ENCODE measurements at regions of chr10 and their contacts with region 1.

Region 1: GRCh38 chr10:11881477-11882417 is 58.6 kb downstream of the PROSER2 start:
- DNase-seq: peak; percentile 65
- ATAC-seq: peak; percentile 74
- H3K4me3 Mint-ChIP-seq: no peak overlapping the region
- H3K27ac Mint-ChIP-seq: peak overlapping the region; percentile 78; the same call in 1 of the 2 replicates
- H3K4me1 Mint-ChIP-seq: peaks cover 7% of the 10 kb centered on the region
- H3K27me3 Mint-ChIP-seq: no peaks in the 10 kb centered on the region; the same call in 1 of the 2 replicates
- CTCF ChIP-seq: peak; percentile 21; the same call in 1 of the 2 replicates

Region 2: DNA sequence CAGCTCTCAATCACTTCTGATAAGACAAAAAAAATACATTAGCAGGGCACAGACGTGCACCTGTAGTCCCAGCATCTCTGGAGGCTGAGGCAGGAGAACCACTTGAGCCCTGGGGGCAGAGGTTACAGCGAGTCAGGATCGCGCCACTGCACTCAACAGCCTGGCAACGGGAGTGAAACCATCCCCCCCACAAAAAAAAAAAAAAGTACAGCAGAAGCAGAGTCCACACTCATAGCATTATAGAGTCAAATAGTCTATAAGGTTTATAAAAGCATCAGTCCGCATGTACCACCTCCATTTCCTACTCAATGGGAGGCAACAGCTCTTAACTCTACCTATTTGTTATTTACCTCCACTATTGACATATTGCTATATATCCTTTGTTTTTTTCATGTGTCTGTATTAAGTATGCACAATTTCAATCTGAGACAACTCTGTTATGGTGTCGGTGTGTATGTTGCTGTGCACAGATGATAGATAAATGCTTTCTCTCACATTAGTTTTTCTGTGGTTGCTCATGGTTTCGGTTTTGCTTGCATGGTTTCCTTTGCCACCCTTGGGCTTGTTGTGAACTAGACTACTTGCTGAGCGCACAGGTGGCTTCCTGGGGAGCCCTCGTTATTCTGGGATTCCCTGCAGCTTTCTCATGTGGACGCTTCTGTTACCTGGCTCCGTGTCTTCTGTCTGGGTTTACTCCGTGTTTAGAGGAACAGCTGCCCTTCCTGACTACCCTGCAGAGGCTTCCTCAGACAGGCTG is 18.2 kb before region 1 on chr10:
- CTCF ChIA-PET with region 1: interaction called, 10 read pairs
- POLR2A ChIA-PET with region 1: no interaction called
- DNase-seq: no peak
- ATAC-seq: no peak
- H3K4me3 Mint-ChIP-seq: no peak overlapping the region
- H3K27ac Mint-ChIP-seq: no peak overlapping the region
- H3K4me1 Mint-ChIP-seq: peaks cover 13% of the 10 kb centered on the region
- H3K27me3 Mint-ChIP-seq: no peaks in the 10 kb centered on the region
- CTCF ChIP-seq: no peak

Region 3: DNA sequence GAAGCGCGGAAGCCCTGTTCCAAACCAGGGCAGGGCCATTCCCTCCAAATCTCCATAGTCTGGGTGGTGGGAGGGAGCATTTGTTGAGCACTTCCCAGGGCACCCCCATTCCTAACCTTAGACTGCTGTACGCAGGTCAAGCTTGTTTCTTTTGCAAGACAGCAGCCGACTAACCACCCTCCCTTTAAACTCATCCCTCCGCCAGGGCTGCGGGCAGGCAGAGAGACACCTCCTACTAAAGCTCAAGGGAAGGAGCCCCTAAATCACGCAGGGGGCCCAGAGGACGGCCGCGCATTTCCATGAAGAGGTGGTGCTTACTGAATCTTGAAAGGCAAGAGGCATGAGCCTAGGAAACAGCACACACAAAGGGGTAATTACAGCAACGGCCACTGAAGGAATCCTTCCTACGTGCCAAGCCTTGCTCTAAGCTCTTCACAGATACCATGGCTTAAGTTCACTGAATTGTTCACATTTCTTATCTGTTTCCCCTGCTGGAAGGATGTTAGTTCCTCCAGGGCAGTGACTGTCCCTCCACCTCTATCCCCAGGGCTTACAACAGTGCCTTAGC is 31.4 kb after region 1 on chr10:
- CTCF ChIA-PET with region 1: interaction called, 12 read pairs
- POLR2A ChIA-PET with region 1: no interaction called
- DNase-seq: no peak
- ATAC-seq: peak; percentile 25
- H3K4me3 Mint-ChIP-seq: no peak overlapping the region
- H3K27ac Mint-ChIP-seq: no peak overlapping the region; the same call in 1 of the 2 replicates
- H3K4me1 Mint-ChIP-seq: peaks cover 13% of the 10 kb centered on the region
- H3K27me3 Mint-ChIP-seq: no peaks in the 10 kb centered on the region
- CTCF ChIP-seq: no peak

Region 4: DNA sequence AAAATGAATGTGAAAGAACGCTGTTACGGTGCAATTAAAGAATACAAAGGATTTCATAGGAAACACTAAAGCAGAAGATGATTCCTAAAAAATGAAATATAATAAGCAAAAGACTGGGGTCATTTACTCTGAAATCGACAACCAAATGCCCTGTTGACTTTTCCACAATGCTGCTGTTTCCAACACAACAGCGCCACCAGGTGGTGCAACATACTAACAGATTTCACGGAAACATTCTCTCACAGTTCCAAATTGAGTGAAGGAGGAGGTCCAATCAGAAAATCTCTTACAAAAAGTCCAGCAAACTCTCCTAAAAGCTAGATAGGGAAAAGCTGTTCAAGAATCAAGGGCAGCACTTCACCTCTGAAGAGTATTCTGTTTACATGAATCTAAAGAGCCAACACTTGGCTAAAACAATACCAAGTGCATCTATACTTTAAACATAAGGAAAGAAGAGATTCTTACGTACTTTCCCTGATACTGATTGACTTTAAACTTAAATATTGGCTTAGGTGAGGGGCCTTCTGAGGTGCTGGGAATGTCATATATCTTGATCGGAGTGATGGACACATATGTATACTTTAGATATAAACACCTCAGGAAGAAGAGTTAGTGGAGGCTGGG is 105.0 kb after region 1 on chr10:
- CTCF ChIA-PET with region 1: interaction called, 53 read pairs
- POLR2A ChIA-PET with region 1: no interaction called
- DNase-seq: peak; percentile 82
- ATAC-seq: peak; percentile 67
- H3K4me3 Mint-ChIP-seq: no peak overlapping the region
- H3K27ac Mint-ChIP-seq: peak overlapping the region; percentile 82
- H3K4me1 Mint-ChIP-seq: no peaks in the 10 kb centered on the region
- H3K27me3 Mint-ChIP-seq: no peaks in the 10 kb centered on the region
- CTCF ChIP-seq: peak; percentile 89

Region 5: GRCh38 chr10:12241810-12242529 is 360.2 kb after region 1 on chr10:
- CTCF ChIA-PET with region 1: no interaction called
- POLR2A ChIA-PET with region 1: no interaction called
- DNase-seq: no peak
- ATAC-seq: no peak
- H3K4me3 Mint-ChIP-seq: no peak overlapping the region
- H3K27ac Mint-ChIP-seq: peak overlapping the region; percentile 13; the same call in 1 of the 2 replicates
- H3K4me1 Mint-ChIP-seq: no peaks in the 10 kb centered on the region
- H3K27me3 Mint-ChIP-seq: no peaks in the 10 kb centered on the region
- CTCF ChIP-seq: no peak

Measured in WTC11 (cell line).